Breast epithelium (tissue), 4 donors: ENCODE measurements at regions of chr22 and their contacts with region 1.

Region 1: GRCh38 chr22:46674367-46674781 is 54.2 kb downstream of the GRAMD4 start:
- DNase-seq: peak in 1 of 2 donors; percentile 45
- H3K4me3 ChIP-seq: peak overlapping the region in 1 of 3 donors; percentile 39
- H3K27ac ChIP-seq: peak overlapping the region in 1 of 2 donors; percentile 74
- H3K4me1 ChIP-seq: no peaks in the 10 kb centered on the region
- H3K27me3 ChIP-seq: no peaks in the 10 kb centered on the region
- CTCF ChIP-seq: no peak
- POLR2A ChIP-seq: no peak

Region 2: GRCh38 chr22:46587492-46588278 is 86.7 kb before region 1 on chr22:
- intact Hi-C with region 1: loop called (anchors 10 kb)
- DNase-seq: no peak
- H3K4me3 ChIP-seq: peak overlapping the region in 1 of 3 donors; percentile 4
- H3K27ac ChIP-seq: no peak overlapping the region
- H3K4me1 ChIP-seq: no peaks in the 10 kb centered on the region
- H3K27me3 ChIP-seq: no peaks in the 10 kb centered on the region
- CTCF ChIP-seq: no peak
- POLR2A ChIP-seq: no peak

Region 3: DNA sequence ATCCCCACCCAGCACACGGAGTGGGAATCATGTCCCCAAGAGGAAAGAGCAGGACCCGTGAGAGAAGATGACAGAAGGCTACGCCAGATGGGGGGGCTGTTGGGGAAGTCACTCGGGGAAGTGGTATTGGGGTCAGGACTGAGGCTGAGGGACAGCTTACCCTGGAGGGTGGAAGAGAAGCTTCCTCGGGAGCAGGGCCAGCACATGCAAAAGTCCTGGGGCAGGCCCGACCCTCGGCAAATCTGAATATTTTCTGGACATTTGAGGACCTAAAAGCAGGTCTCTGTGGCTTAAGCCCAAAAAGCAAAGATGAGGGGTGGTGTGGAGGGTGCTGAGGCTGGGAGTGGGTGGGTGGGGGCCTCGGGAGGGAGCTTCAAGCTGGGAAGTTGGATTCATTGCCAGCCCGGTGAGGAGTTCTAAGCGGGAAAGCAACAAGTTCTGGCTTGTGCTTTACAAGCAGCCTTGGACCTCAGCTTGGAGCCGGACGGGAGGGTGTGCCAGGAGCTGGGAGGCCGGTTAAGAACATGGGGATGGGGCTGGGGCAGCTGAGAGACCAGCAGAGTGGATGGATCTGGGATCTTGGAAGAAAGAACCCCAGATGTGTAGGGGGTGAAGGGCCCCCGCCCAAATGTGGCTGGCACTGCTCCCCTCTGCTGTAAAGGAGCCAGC is 19.3 kb before region 1 on chr22:
- intact Hi-C with region 1: loop called (anchors 1 kb)
- DNase-seq: no peak
- H3K4me3 ChIP-seq: no peak overlapping the region
- H3K27ac ChIP-seq: no peak overlapping the region
- H3K4me1 ChIP-seq: peaks cover 3 to 8% of the 10 kb centered on the region in 2 donors
- H3K27me3 ChIP-seq: no peaks in the 10 kb centered on the region
- CTCF ChIP-seq: no peak
- POLR2A ChIP-seq: no peak